Activated CD4-positive, alpha-beta T cell treated with anti-CD3 and anti-CD28 coated beads for 36 hours (primary cell): ENCODE measurements at regions of chr3 and their contacts with region 1.

Region 1: GRCh38 chr3:129627429-129628168 is 21.1 kb upstream of the PLXND1 start:
- DNase-seq: peak; percentile 82
- ATAC-seq: peak; percentile 67
- H3K4me3 Mint-ChIP-seq: peak overlapping the region; percentile 88
- H3K27ac Mint-ChIP-seq: peak overlapping the region; percentile 67
- H3K4me1 Mint-ChIP-seq: peaks cover 13% of the 10 kb centered on the region
- H3K27me3 Mint-ChIP-seq: no peaks in the 10 kb centered on the region

Region 2: GRCh38 chr3:129383292-129383860 is 244.2 kb before region 1 on chr3:
- CTCF ChIA-PET with region 1: interaction called, 4 read pairs
- POLR2A ChIA-PET with region 1: no interaction called
- intact Hi-C with region 1: loop called in 1 of 2 experiments (anchors 2 kb)
- DNase-seq: peak; percentile 67
- ATAC-seq: peak; percentile 97
- H3K4me3 Mint-ChIP-seq: no peak overlapping the region
- H3K27ac Mint-ChIP-seq: no peak overlapping the region
- H3K4me1 Mint-ChIP-seq: no peaks in the 10 kb centered on the region
- H3K27me3 Mint-ChIP-seq: no peaks in the 10 kb centered on the region

Region 3: DNA sequence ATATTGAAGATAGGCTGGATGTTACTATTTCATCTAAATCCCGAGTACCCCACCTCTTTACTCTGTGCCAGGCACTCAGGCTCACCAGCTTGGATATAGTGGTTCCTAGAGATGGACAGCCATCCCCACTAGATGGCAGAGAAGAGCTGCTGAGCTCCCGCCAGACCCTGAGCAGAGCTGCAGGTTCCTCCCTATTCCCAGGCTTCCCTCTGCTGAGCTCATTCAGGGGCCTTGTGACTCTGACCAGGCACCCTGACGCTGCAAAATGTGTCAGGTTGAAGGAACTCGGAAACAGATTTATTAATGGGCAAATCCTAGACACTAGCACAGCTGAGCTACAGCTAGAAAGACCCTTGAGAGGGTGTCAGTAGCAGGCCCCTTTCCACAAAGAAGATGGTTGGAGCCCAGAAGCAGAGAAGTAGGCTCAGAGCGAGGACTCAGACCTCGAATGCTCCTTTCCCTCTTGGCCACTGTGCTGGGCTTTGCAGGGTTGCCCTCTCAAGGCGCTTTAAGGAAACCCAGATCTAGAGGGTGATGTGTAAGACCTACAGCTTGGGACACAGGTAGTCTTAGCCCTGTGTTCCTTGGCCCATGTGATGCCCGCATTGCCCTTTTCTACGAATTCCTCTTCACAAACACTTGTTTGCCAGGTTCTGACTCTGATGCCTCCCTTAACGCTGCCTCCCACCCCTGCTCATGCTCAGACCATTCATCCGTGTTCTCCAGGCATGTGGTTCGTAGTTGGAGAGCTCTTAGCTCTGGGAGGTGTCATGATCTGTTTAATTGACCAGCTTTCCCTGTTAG is 137.2 kb before region 1 on chr3:
- CTCF ChIA-PET with region 1: interaction called, 10 read pairs
- POLR2A ChIA-PET with region 1: no interaction called
- intact Hi-C with region 1: loop called in 1 of 2 experiments (anchors 2 kb)
- DNase-seq: peak; percentile 71
- ATAC-seq: peak; percentile 96
- H3K4me3 Mint-ChIP-seq: no peak overlapping the region
- H3K27ac Mint-ChIP-seq: no peak overlapping the region
- H3K4me1 Mint-ChIP-seq: no peaks in the 10 kb centered on the region
- H3K27me3 Mint-ChIP-seq: no peaks in the 10 kb centered on the region

Region 4: GRCh38 chr3:129783470-129783869 is 155.9 kb after region 1 on chr3:
- CTCF ChIA-PET with region 1: no interaction called
- POLR2A ChIA-PET with region 1: no interaction called
- intact Hi-C with region 1: no loop called
- DNase-seq: no peak
- ATAC-seq: no peak
- H3K4me3 Mint-ChIP-seq: no peak overlapping the region
- H3K27ac Mint-ChIP-seq: no peak overlapping the region
- H3K4me1 Mint-ChIP-seq: no peaks in the 10 kb centered on the region
- H3K27me3 Mint-ChIP-seq: no peaks in the 10 kb centered on the region

Region 5: DNA sequence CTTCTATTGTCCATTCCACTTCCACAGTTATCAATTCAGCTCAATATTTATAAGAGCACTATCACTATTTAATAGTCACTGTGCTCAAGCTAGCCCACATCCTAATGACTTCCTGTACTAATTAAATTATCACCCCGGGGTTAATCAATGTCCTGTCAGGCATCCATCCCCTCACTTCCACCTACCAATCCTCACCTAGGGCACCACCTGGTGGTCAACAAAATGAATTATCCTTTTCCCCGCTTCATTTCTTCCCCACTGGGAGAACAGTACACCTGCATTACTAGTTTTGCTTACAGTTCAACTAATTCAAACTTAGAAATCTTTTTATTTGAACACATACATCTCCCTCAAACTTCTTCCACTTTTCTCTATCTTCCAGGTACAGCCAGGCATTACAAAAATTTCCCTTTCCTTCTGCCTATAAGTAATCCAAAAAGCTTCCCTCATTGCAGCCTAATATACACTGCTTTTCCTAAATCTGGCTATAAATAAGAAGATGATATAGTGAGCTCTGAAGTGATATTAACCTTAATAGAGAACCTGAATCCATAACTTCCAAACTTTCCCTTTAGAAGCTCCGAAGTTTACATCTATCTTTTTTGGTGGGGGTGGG is 197.4 kb after region 1 on chr3:
- CTCF ChIA-PET with region 1: interaction called, 12 read pairs
- POLR2A ChIA-PET with region 1: no interaction called
- intact Hi-C with region 1: loop called (anchors 1 to 2 kb)
- DNase-seq: peak; percentile 65
- ATAC-seq: peak; percentile 45
- H3K4me3 Mint-ChIP-seq: no peak overlapping the region
- H3K27ac Mint-ChIP-seq: no peak overlapping the region
- H3K4me1 Mint-ChIP-seq: peaks cover 13% of the 10 kb centered on the region
- H3K27me3 Mint-ChIP-seq: no peaks in the 10 kb centered on the region

Region 6: DNA sequence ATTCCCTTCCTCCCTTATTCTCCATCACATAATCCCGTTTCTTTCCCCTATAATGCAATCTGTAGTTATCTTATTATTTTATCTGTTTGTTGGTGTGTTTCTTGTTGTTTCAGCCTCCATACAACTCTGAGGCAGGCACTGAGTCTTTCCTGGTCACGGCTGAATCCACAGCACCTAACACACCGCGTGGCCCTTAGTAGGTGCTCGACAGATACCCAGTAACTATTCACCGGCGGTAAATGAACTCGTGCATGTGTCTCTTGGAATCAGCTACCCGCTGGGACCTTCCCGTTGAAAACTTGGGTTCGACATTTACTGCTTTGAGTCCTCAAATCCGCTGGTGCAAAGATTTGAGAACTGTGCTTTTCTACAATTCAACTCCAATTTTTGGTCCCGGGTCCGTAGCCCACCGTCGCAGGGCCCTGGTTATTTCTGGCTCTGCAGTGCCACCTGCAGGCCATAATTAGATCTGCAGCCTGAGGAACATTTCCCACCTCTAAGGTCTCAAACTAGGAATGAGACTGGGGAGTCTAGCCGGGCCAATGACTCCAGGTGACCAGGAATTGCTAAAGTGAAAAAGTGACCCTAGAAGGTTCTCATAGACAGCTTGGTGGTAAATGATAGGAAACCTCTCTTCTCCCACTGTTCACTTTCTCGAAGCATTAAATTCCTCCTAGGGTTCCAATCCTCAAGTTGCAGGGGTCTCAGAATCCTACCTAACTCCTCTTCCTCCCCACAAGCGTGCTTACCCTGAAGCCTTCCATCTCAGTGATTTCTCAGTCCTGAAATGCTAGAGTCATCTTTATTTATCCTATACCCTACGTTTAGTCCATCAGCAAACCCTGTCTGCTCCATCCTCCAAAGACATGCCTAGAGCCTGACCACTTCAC is 306.9 kb after region 1 on chr3:
- CTCF ChIA-PET with region 1: interaction called, 3 read pairs
- POLR2A ChIA-PET with region 1: no interaction called
- intact Hi-C with region 1: loop called (anchors 1 kb)
- DNase-seq: peak; percentile 41
- ATAC-seq: no peak
- H3K4me3 Mint-ChIP-seq: no peak overlapping the region
- H3K27ac Mint-ChIP-seq: no peak overlapping the region
- H3K4me1 Mint-ChIP-seq: peaks cover 5% of the 10 kb centered on the region
- H3K27me3 Mint-ChIP-seq: peaks cover 2% of the 10 kb centered on the region